K562 (cell line): ENCODE measurements at regions of chr10 and their contacts with region 1.

Region 1: GRCh38 chr10:102917962-102918816 is at the start of gene CNNM2:
- DNase-seq: peak; percentile 95 to 99 (median 96)
- ATAC-seq: peak; percentile 93
- H3K4me3 ChIP-seq: peak within 1 kb of the TSS; percentile 87
- H3K27ac ChIP-seq: peak within 1 kb of the TSS; percentile 81; the same call in 2 of the 3 replicates
- H3K4me1 ChIP-seq: peaks cover 0 to 26% of the 10 kb centered on the region in 2 experiments; a peak in 4 of 5 replicates
- H3K27me3 ChIP-seq: no peaks in the 10 kb centered on the region
- CTCF ChIP-seq: no peak
- EP300 ChIP-seq: peak; percentile 1; the same call in 1 of the 2 replicates
- POLR2A ChIP-seq: peak; percentile 67
- RAD21 ChIP-seq: no peak
- polyA plus RNA-seq, gene CNNM2: 0.21 to 0.23 TPM

Region 2: GRCh38 chr10:102853944-102854694 is 64.1 kb before region 1 on chr10 and contains the start of gene BORCS7:
- CTCF ChIA-PET with region 1: no interaction called
- POLR2A ChIA-PET with region 1: interaction called, 4 read pairs
- in situ Hi-C with region 1: no loop called
- intact Hi-C with region 1: loop called (anchors 1 kb)
- DNase-seq: peak; percentile 71 to 94 (median 78)
- ATAC-seq: peak; percentile 98
- H3K4me3 ChIP-seq: peak within 1 kb of the TSS; percentile 95
- H3K27ac ChIP-seq: peak within 1 kb of the TSS; percentile 99
- H3K4me1 ChIP-seq: peaks cover 7 to 20% of the 10 kb centered on the region in 2 experiments; a peak in 3 of 5 replicates
- H3K27me3 ChIP-seq: no peaks in the 10 kb centered on the region
- CTCF ChIP-seq: no peak
- EP300 ChIP-seq: peak; percentile 56; the same call in 1 of the 2 replicates
- POLR2A ChIP-seq: peak; percentile 94
- RAD21 ChIP-seq: no peak
- polyA plus RNA-seq, gene BORCS7: 14.0 to 17.0 TPM

Region 3: DNA sequence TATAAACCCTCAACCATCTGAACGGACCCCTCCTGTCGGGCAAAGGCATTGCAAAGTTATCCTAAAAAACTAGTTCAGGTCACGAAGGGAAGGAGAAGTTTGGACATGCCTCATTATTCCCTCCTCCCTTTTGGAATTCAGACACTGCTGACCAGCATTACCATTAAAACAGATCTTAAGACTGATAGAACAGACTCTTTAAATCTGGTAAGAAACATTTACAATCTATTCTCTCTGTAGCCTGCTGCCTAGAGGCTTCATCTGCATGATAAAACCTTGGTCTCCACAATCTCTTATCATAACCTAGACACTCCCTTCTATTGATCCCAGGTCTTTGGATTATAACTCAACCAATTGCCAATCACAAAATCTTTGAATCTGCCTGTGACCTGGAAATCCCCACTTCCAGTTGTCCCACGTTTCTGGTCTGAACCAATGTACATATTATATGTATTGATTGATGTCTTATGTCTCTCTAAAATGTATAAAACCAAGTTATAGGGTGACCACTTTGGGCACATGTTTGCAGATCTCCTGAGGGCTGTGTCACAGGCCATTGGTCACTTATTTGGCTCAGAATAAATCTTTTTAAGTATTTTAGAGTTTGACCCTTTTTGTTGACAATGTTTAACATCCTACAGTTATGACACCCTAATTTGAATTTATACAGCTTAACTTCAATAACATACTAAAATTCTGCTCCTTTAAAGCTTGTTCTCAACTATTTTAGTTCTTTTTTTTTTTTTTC is 23.5 kb before region 1 on chr10:
- CTCF ChIA-PET with region 1: no interaction called
- POLR2A ChIA-PET with region 1: no interaction called
- in situ Hi-C with region 1: no loop called
- intact Hi-C with region 1: no loop called
- DNase-seq: no peak
- ATAC-seq: no peak
- H3K4me3 ChIP-seq: no peak overlapping the region
- H3K27ac ChIP-seq: no peak overlapping the region
- H3K4me1 ChIP-seq: no peaks in the 10 kb centered on the region; a peak in 1 of 5 replicates
- H3K27me3 ChIP-seq: no peaks in the 10 kb centered on the region
- CTCF ChIP-seq: no peak
- EP300 ChIP-seq: no peak
- POLR2A ChIP-seq: no peak
- RAD21 ChIP-seq: no peak

Region 4: GRCh38 chr10:103053659-103054581 is 135.7 kb after region 1 on chr10:
- CTCF ChIA-PET with region 1: no interaction called
- POLR2A ChIA-PET with region 1: interaction called, 3 read pairs
- in situ Hi-C with region 1: loop called (anchors 5 kb)
- intact Hi-C with region 1: no loop called
- DNase-seq: peak in 3 of 4 experiments; percentile 12 to 65 (median 45)
- ATAC-seq: peak; percentile 99
- H3K4me3 ChIP-seq: no peak overlapping the region
- H3K27ac ChIP-seq: no peak overlapping the region
- H3K4me1 ChIP-seq: peaks cover 0 to 6% of the 10 kb centered on the region in 2 experiments; a peak in 2 of 5 replicates
- H3K27me3 ChIP-seq: no peaks in the 10 kb centered on the region
- CTCF ChIP-seq: peak; percentile 46 to 55 (median 52); a peak in 5 of 6 replicates
- EP300 ChIP-seq: no peak
- POLR2A ChIP-seq: no peak
- RAD21 ChIP-seq: peak; percentile 17 to 54; a peak in 3 of 4 replicates

Region 5: GRCh38 chr10:103181244-103181643 is 263.1 kb after region 1 on chr10:
- CTCF ChIA-PET with region 1: no interaction called
- POLR2A ChIA-PET with region 1: no interaction called
- in situ Hi-C with region 1: no loop called
- intact Hi-C with region 1: no loop called
- DNase-seq: no peak
- ATAC-seq: peak; percentile 55; the same call in 2 of the 3 replicates
- H3K4me3 ChIP-seq: no peak overlapping the region
- H3K27ac ChIP-seq: 0 out of 3 replicates have a peak overlapping the region, but pooled peaks have one; percentile 8
- H3K4me1 ChIP-seq: no peaks in the 10 kb centered on the region; a peak in 1 of 5 replicates
- H3K27me3 ChIP-seq: no peaks in the 10 kb centered on the region
- CTCF ChIP-seq: no peak
- EP300 ChIP-seq: no peak
- POLR2A ChIP-seq: no peak
- RAD21 ChIP-seq: no peak

Region 6: GRCh38 chr10:103244663-103245271 is 326.6 kb after region 1 on chr10:
- CTCF ChIA-PET with region 1: interaction called, 12 read pairs
- POLR2A ChIA-PET with region 1: no interaction called
- in situ Hi-C with region 1: loop called (anchors 5 kb)
- intact Hi-C with region 1: loop called (anchors 1 kb)
- DNase-seq: peak; percentile 72 to 76 (median 74)
- ATAC-seq: peak; percentile 94
- H3K4me3 ChIP-seq: no peak overlapping the region
- H3K27ac ChIP-seq: no peak overlapping the region
- H3K4me1 ChIP-seq: no peaks in the 10 kb centered on the region
- H3K27me3 ChIP-seq: no peaks in the 10 kb centered on the region
- CTCF ChIP-seq: peak; percentile 71 to 84 (median 79)
- EP300 ChIP-seq: no peak
- POLR2A ChIP-seq: no peak
- RAD21 ChIP-seq: peak; percentile 81 to 91

Region 7: GRCh38 chr10:103598654-103599115 is 680.5 kb after region 1 on chr10:
- CTCF ChIA-PET with region 1: no interaction called
- POLR2A ChIA-PET with region 1: no interaction called
- in situ Hi-C with region 1: no loop called
- intact Hi-C with region 1: no loop called
- DNase-seq: peak; percentile 62 to 70 (median 66)
- ATAC-seq: peak; percentile 95
- H3K4me3 ChIP-seq: no peak overlapping the region
- H3K27ac ChIP-seq: no peak overlapping the region
- H3K4me1 ChIP-seq: no peaks in the 10 kb centered on the region; a peak in 1 of 5 replicates
- H3K27me3 ChIP-seq: no peaks in the 10 kb centered on the region
- CTCF ChIP-seq: peak; percentile 59 to 78 (median 75)
- EP300 ChIP-seq: no peak
- POLR2A ChIP-seq: no peak
- RAD21 ChIP-seq: peak; percentile 79 to 83